ENCODE measurements at regions of chr7 and their contacts with region 1.

Region 1: GRCh38 chr7:27739909-27740448 is at the start of gene TAX1BP1:
- DNase-seq: peak; percentile 94
- ATAC-seq: peak; percentile 91
- H3K4me3 Mint-ChIP-seq: peak within 1 kb of the TSS; percentile 92
- H3K27ac Mint-ChIP-seq: peak within 1 kb of the TSS; percentile 98
- H3K4me1 Mint-ChIP-seq: peaks cover 24% of the 10 kb centered on the region
- H3K27me3 Mint-ChIP-seq: peaks cover 6% of the 10 kb centered on the region
- total RNA-seq, gene TAX1BP1: 71.8 to 81.2 TPM

Region 2: DNA sequence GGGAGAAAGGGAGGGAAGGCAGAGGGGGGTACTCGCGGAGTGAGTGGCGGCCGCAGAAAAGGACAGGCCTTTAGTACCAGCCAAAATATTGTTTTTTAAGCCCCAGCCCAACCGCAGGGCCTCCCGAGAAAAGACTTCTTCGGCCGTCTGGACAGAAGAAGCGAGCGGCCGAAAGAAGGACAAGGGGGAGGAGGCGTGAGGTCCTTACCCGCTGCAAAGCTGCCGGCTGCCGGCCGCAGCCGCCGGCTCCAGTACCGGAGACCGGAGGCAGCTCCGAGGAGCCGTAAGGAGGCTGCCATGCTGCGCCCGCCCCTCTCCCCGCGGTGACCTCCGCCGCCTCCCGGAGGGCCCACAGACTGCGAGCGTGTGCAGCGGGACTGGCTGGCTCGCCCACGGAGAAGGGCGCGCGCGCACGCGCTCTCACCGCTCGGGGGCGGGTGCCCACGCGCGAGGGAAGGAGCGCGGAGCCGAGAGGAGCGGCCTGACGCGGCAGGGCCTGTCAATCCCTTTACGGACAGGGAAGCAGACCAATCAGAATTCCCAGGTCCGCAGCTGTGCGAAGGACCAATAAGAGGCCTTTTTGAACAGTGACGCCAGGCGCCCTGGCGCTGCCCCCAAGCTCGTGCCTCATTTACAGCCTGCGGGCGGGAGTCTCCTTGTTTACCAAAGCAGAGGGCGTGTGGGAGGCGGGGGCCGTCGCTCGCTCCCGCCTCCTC is 77.3 kb before region 1 on chr7 and contains the start of gene HIBADH:
- POLR2A ChIA-PET with region 1: interaction called, 29 read pairs
- DNase-seq: peak; percentile 91
- ATAC-seq: peak; percentile 99
- H3K4me3 Mint-ChIP-seq: peak within 1 kb of the TSS; percentile 83
- H3K27ac Mint-ChIP-seq: peak within 1 kb of the TSS; percentile 66
- H3K4me1 Mint-ChIP-seq: peaks cover 11% of the 10 kb centered on the region
- H3K27me3 Mint-ChIP-seq: no peaks in the 10 kb centered on the region
- total RNA-seq, gene HIBADH: 12.9 to 14.4 TPM

Measured in activated naive CD8-positive, alpha-beta T cell treated with anti-CD3 and anti-CD28 coated beads, Interleukin-2, amount 10 ng/mL, durations not matched to agents 7 days and 5 days (primary cell).